ENCODE measurements at regions of chr9 and their contacts with region 1.

Region 1: DNA sequence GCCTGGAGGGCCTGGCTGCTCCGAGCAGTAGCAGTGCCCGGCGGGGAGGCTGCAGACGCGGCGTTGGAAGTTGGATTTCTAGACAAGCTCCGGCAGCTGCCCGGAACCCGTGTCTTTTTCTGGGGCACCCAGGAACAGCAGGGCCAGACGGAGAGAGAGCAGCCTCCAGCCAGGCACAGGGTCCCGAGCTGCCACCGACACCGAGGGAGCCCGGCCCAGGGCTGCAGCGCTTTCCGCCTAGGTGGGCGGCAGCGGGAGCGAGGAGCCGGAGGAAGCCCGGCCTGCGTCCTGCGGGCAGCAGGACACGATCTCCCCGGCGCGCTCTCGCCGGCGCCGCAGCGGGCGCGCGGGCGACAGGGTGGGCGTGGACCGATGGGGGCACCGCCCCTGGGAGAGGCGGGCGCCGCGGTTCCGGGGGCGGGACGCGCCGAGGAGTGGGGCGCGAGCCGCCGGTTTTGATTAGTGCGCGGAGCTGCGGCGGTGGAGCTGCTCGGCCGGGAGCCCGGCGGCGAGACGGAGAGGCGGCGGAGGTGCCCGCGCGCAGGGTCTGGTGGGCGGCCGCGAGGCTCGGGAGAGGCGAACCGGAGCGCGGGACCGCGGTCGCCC is at the start of gene UGCG:
- DNase-seq: peak; percentile 86
- H3K4me3 Mint-ChIP-seq: peak within 1 kb of the TSS; percentile 90
- H3K27ac Mint-ChIP-seq: peak within 1 kb of the TSS; percentile 87
- H3K4me1 Mint-ChIP-seq: peaks cover 19% of the 10 kb centered on the region
- H3K27me3 Mint-ChIP-seq: peaks cover 4% of the 10 kb centered on the region
- total RNA-seq, gene UGCG: 22.6 and 22.9 TPM in 2 replicates

Region 2: GRCh38 chr9:111631071-111631971 is 265.1 kb before region 1 on chr9 and contains the start of gene DNAJC25:
- intact Hi-C with region 1: loop called (anchors 10 kb)
- DNase-seq: peak; percentile 97
- H3K4me3 Mint-ChIP-seq: peak within 1 kb of the TSS; percentile 98
- H3K27ac Mint-ChIP-seq: peak within 1 kb of the TSS; percentile 93
- H3K4me1 Mint-ChIP-seq: peaks cover 54% of the 10 kb centered on the region
- H3K27me3 Mint-ChIP-seq: peaks cover 3% of the 10 kb centered on the region
- total RNA-seq, gene DNAJC25: 5.8 and 6.1 TPM in 2 replicates

Region 3: DNA sequence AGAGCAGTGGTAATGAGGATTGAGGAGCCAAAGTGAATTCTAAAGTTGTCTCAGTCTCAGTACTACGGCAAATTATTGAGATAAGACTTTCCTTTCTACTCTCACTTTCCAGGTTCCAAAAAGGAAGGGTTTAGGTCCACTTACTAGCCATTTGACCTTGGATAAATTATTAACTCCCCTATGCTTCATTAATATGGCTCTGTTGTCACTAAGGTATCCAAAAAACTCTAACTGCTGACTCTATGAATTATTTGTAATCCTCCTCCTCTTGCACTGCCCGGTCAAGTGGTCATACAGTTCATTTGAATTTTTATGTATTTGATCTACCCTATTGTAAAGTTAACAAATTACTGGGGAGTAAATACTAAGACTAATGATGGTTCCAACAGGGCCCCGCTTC is 17.5 kb before region 1 on chr9:
- intact Hi-C with region 1: no loop called
- DNase-seq: no peak
- H3K4me3 Mint-ChIP-seq: no peak overlapping the region
- H3K27ac Mint-ChIP-seq: no peak overlapping the region
- H3K4me1 Mint-ChIP-seq: no peaks in the 10 kb centered on the region
- H3K27me3 Mint-ChIP-seq: peaks cover 24% of the 10 kb centered on the region

Region 4: GRCh38 chr9:111909441-111909840 is 13.0 kb after region 1 on chr9:
- intact Hi-C with region 1: loop called (anchors 1 kb)
- DNase-seq: no peak
- H3K4me3 Mint-ChIP-seq: no peak overlapping the region
- H3K27ac Mint-ChIP-seq: no peak overlapping the region
- H3K4me1 Mint-ChIP-seq: peaks cover 66% of the 10 kb centered on the region
- H3K27me3 Mint-ChIP-seq: no peaks in the 10 kb centered on the region

Region 5: DNA sequence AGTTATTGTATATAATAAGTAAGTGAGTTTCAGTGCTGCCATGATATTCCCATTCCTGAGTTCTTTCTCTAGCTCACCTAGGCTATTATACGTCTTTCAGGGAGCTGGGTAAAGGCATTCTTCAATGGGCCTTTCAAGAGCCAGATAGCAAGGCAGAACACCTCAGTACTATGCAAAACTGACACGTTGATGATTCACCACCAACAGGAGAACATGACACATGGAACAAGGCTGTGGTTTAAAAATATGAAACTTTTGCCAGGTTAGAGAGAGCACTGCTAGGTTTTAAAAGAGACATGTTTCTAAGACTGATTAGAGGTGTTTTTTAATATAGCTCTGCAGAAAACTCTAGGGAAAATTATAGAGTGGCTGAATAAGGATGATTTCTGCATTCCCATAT is 96.1 kb after region 1 on chr9:
- intact Hi-C with region 1: loop called (anchors 1 kb)
- DNase-seq: no peak
- H3K4me3 Mint-ChIP-seq: no peak overlapping the region
- H3K27ac Mint-ChIP-seq: peak overlapping the region; percentile 37
- H3K4me1 Mint-ChIP-seq: peaks cover 26% of the 10 kb centered on the region
- H3K27me3 Mint-ChIP-seq: peaks cover 14% of the 10 kb centered on the region

Region 6: GRCh38 chr9:112074250-112075008 is 178.0 kb after region 1 on chr9:
- intact Hi-C with region 1: loop called (anchors 1 kb)
- DNase-seq: peak; percentile 35
- H3K4me3 Mint-ChIP-seq: no peak overlapping the region
- H3K27ac Mint-ChIP-seq: no peak overlapping the region
- H3K4me1 Mint-ChIP-seq: peaks cover 36% of the 10 kb centered on the region
- H3K27me3 Mint-ChIP-seq: no peaks in the 10 kb centered on the region

Region 7: GRCh38 chr9:112084907-112085306 is 188.5 kb after region 1 on chr9:
- intact Hi-C with region 1: no loop called
- DNase-seq: no peak
- H3K4me3 Mint-ChIP-seq: no peak overlapping the region
- H3K27ac Mint-ChIP-seq: no peak overlapping the region
- H3K4me1 Mint-ChIP-seq: peaks cover 5% of the 10 kb centered on the region
- H3K27me3 Mint-ChIP-seq: no peaks in the 10 kb centered on the region

Region 8: GRCh38 chr9:112486221-112487007 is 590.0 kb after region 1 on chr9 and contains the start of gene KIAA1958:
- intact Hi-C with region 1: loop called (anchors 1 kb)
- DNase-seq: peak; percentile 85
- H3K4me3 Mint-ChIP-seq: peak within 1 kb of the TSS; percentile 97
- H3K27ac Mint-ChIP-seq: peak within 1 kb of the TSS; percentile 96
- H3K4me1 Mint-ChIP-seq: peaks cover 36% of the 10 kb centered on the region
- H3K27me3 Mint-ChIP-seq: peaks cover 2% of the 10 kb centered on the region
- total RNA-seq, gene KIAA1958: 8.2 and 8.6 TPM in 2 replicates

Region 9: DNA sequence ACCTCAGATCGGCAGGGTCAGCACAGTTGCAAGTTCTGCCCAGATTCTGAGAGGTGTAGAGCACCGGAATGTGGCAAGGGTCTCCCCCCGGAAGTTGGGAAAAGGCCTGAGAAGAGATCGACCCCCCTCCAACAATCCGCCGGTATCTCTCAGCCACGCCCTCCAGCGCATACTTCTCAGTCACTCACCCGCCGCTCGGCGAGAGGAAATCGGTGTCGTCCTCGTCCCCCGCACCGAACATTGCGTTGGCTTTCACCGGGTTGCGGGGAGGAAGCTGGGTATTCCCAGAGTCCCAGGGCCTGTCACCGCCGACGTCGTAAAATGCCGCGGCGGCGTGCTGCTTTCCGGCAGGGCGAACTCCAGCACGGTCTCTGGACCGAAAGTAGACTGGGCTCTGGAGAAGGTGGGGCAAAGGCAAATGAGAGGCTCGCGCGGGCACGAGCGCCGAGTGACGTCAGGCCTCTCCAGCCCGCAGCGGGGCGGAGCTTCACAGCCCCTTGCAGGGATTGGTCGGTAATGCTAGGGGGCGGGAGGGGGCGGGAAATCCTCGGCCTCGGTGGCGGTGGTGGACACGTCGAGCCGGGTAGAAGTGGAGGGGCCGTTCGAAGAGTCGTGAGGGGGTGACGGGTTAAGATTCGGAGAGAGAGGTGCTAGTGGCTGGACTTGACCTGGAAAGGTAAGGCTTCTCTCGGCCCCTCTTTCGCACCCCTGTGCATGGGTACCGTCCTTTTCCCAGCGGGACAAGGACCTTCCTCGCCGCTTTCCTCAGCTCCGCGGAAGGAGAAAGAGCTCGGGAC is 1324.7 kb after region 1 on chr9 and contains the starts of genes FKBP15 and SLC31A1:
- intact Hi-C with region 1: loop called (anchors 5 kb)
- DNase-seq: peak; percentile 96
- H3K4me3 Mint-ChIP-seq: peak within 1 kb of the TSS; percentile 98
- H3K27ac Mint-ChIP-seq: peak within 1 kb of the TSS; percentile 97
- H3K4me1 Mint-ChIP-seq: peaks cover 64% of the 10 kb centered on the region
- H3K27me3 Mint-ChIP-seq: no peaks in the 10 kb centered on the region
- total RNA-seq, gene FKBP15: 34.9 and 35.8 TPM in 2 replicates
- total RNA-seq, gene SLC31A1: 16.1 and 17.6 TPM in 2 replicates